ENCODE measurements at regions of chr11 and their contacts with region 1.

Region 1: GRCh38 chr11:5380740-5381342 is 2.8 kb upstream of the OR51M1 start:
- DNase-seq: peak; percentile 50 to 64 (median 54)
- H3K4me3 ChIP-seq: no peak overlapping the region
- H3K27ac ChIP-seq: no peak overlapping the region
- H3K4me1 ChIP-seq: no peaks in the 10 kb centered on the region
- H3K27me3 ChIP-seq: peaks cover 0 to 5% (median 0%) of the 10 kb centered on the region in 5 experiments

Region 2: DNA sequence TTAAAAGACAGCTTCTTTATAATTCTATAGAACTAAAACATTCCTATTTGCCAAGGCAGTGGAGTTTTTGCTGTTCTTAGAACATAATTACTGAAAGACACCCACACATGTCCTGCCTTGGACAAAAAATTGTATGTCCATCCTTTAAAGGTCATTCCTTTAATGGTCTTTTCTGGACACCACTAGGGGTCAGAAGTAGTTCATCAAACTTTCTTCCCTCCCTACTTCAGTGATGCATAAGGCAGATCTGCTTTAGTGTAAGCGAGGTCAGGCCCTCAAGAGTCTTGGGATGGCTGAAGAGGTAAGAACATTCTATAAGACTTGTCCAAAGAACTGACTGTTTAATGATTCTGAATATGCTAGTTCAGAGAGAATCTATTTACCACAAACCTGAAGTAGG is 176.1 kb before region 1 on chr11:
- CTCF ChIA-PET with region 1: interaction called, 14 read pairs
- POLR2A ChIA-PET with region 1: no interaction called
- DNase-seq: peak; percentile 57 to 61 (median 57)
- H3K4me3 ChIP-seq: no peak overlapping the region
- H3K27ac ChIP-seq: no peak overlapping the region
- H3K4me1 ChIP-seq: no peaks in the 10 kb centered on the region
- H3K27me3 ChIP-seq: no peaks in the 10 kb centered on the region

Region 3: DNA sequence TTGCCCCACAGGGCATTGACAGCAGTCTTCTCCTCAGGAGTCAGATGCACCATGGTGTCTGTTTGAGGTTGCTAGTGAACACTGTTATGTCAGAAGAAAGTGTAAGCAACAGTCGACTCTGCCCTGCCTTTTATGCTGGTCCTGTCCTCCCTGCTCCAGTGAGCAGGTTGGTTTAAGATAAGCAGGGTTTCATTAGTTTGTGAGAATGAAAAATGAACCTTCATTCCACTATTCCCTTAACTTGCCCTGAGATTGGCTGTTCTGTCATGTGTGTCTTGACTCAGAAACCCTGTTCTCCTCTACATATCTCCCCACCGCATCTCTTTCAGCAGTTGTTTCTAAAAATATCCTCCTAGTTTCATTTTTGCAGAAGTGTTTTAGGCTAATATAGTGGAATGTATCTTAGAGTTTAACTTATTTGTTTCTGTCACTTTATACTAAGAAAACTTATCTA is 146.4 kb before region 1 on chr11 and contains the start of gene HBD:
- CTCF ChIA-PET with region 1: no interaction called
- POLR2A ChIA-PET with region 1: no interaction called
- DNase-seq: peak; percentile 53 to 92 (median 83)
- H3K4me3 ChIP-seq: peak within 1 kb of the TSS in 4 of 7 experiments; percentile 2 to 51 (median 30)
- H3K27ac ChIP-seq: peak within 1 kb of the TSS in 1 of 2 experiments; percentile 70
- H3K4me1 ChIP-seq: peaks cover 9 to 28% (median 20%) of the 10 kb centered on the region in 4 experiments
- H3K27me3 ChIP-seq: no peaks in the 10 kb centered on the region